Endothelial cell of umbilical vein (primary cell): ENCODE measurements at regions of chr18 and their contacts with region 1.

Region 1: GRCh38 chr18:48848641-48849159 is 102.1 kb downstream of the SMAD7 start:
- DNase-seq: peak; percentile 93
- H3K4me3 ChIP-seq: no peak overlapping the region
- H3K27ac ChIP-seq: peak overlapping the region; percentile 67
- H3K4me1 ChIP-seq: peaks cover 58% of the 10 kb centered on the region
- H3K27me3 ChIP-seq: no peaks in the 10 kb centered on the region
- CTCF ChIP-seq: no peak
- POLR2A ChIP-seq: peak; percentile 59

Region 2: DNA sequence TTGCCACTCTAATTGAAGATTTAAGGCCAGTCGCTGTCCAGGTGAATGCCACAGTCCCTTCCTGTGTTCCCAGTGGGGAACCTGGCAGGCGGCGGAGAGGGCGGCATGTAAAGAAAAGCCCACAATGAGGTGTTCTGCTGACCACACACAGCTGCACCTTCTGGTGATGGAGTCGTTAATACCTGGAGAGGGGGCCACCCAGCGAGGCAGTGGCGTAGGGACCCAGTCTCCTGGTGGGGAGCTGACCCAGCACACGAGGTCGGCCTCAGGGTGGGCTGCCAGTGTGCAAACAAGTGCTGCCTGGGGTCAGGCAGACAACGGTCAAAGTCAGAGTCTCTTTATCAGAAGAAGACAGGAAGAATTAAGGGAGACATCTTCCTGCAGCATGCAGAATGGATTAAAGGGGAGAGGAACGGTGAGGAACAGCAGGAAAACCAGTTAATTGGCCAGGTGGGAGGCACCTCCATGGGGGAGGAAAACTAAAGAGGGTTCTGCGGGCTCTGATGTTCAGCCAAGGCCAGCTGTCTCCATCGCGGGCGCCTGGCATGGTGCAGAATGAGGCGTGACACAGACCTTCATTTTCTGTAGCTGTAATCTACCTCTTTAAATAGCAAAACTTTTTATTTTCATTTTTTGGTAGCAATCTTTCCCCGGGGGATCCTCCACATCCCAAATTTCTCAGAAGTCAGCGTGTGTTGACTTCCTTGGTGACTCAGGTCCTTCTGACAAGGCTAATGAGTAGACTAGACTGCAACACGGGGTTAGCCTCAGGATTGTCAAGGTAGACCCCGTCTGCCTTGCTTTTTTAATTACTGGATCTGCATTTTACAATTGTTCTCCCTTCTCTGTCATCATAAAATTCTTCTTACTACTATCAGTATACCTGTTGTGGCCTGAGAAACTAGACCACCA is 23.8 kb after region 1 on chr18:
- CTCF ChIA-PET with region 1: interaction called, 4 read pairs
- POLR2A ChIA-PET with region 1: no interaction called
- dilution Hi-C with region 1: no loop called
- intact Hi-C with region 1: loop called (anchors 2 kb)
- DNase-seq: no peak
- H3K4me3 ChIP-seq: no peak overlapping the region
- H3K27ac ChIP-seq: peak overlapping the region; percentile 36
- H3K4me1 ChIP-seq: peaks cover 8% of the 10 kb centered on the region
- H3K27me3 ChIP-seq: no peaks in the 10 kb centered on the region
- CTCF ChIP-seq: no peak
- POLR2A ChIP-seq: no peak

Region 3: DNA sequence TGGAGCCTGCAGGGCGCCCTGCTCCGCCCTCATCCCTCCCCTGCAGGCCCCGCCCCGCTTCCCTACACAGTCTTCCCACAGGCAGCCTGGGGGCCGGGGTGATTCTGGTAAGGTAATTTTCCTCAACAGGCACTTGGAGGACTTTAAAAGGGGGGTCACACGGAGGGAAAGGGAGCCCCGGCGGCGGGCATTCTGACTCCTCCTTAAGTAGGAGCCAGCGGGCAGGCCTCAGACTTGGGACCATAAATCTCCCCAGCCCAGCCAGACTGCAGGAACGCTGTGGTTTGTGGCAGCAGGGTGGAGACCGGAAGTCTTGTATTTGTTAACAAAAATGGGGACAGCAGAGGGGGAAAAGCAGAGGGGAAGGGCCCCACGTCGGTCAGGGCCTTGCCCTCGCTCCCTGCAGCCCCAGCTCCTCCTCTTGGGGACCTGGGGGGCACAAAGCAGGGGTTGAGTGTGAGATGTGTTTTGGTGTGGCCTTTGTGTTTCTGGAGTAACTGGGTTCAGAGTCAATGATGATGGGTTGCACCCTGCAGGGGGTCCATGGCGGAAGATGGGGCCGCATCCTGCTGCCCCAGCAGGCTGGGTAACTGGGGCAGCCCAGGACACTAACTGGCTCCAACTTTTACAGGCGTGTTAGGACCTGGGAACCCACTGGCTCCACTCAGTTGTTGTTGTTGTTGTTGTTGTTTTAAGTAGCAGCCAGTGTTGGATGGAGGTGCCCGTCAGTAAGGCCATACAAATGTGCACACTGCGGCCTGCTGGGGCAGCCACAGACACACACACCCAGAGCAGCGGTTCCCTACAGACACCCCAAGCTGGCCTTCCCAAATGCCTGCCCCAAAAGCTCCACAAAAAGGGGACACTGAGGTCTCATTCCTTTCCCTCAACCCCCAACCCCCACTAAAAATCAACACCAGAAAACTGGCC is 74.4 kb after region 1 on chr18:
- CTCF ChIA-PET with region 1: no interaction called
- POLR2A ChIA-PET with region 1: no interaction called
- dilution Hi-C with region 1: no loop called
- intact Hi-C with region 1: loop called (anchors 2 kb)
- DNase-seq: peak; percentile 52
- H3K4me3 ChIP-seq: no peak overlapping the region
- H3K27ac ChIP-seq: peak overlapping the region; percentile 68
- H3K4me1 ChIP-seq: peaks cover 40% of the 10 kb centered on the region
- H3K27me3 ChIP-seq: no peaks in the 10 kb centered on the region
- CTCF ChIP-seq: no peak
- POLR2A ChIP-seq: peak; percentile 16

Region 4: DNA sequence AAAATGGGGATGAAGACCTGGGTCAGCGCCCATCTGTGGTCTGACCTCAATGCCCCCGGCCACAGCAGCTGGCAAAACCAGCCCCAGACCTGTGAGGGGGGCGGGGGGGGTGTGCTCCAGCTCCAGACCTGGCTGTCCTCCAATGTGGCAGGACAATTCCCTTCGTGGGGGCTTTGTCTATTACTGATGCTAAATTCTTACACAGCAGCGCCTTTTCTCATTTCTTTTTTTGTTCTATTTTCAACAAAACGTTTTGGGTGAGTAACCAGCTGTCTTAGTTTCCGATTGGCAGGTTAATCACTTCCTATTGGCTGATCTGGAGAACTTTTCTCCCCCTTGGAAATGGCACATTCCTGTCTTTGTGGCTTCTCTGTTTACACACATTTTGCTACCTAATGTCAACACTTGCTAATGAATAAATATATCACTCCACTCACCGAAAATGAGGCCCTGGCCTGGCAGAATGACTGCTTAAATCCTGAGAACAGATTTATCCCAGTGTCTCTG is 97.7 kb after region 1 on chr18:
- CTCF ChIA-PET with region 1: interaction called, 5 read pairs
- POLR2A ChIA-PET with region 1: no interaction called
- dilution Hi-C with region 1: no loop called
- intact Hi-C with region 1: loop called (anchors 2 kb)
- DNase-seq: peak; percentile 71
- H3K4me3 ChIP-seq: no peak overlapping the region
- H3K27ac ChIP-seq: no peak overlapping the region
- H3K4me1 ChIP-seq: peaks cover 68% of the 10 kb centered on the region
- H3K27me3 ChIP-seq: no peaks in the 10 kb centered on the region
- CTCF ChIP-seq: no peak
- POLR2A ChIP-seq: peak; percentile 46

Region 5: GRCh38 chr18:49072524-49072934 is 223.8 kb after region 1 on chr18:
- CTCF ChIA-PET with region 1: no interaction called
- POLR2A ChIA-PET with region 1: no interaction called
- dilution Hi-C with region 1: no loop called
- intact Hi-C with region 1: no loop called
- DNase-seq: no peak
- H3K4me3 ChIP-seq: no peak overlapping the region
- H3K27ac ChIP-seq: no peak overlapping the region
- H3K4me1 ChIP-seq: no peaks in the 10 kb centered on the region
- H3K27me3 ChIP-seq: no peaks in the 10 kb centered on the region
- CTCF ChIP-seq: no peak
- POLR2A ChIP-seq: no peak

Region 6: GRCh38 chr18:49381267-49381850 is 532.7 kb after region 1 on chr18:
- CTCF ChIA-PET with region 1: no interaction called
- POLR2A ChIA-PET with region 1: no interaction called
- dilution Hi-C with region 1: no loop called
- intact Hi-C with region 1: no loop called
- DNase-seq: no peak
- H3K4me3 ChIP-seq: no peak overlapping the region
- H3K27ac ChIP-seq: no peak overlapping the region
- H3K4me1 ChIP-seq: no peaks in the 10 kb centered on the region
- H3K27me3 ChIP-seq: no peaks in the 10 kb centered on the region
- CTCF ChIP-seq: no peak
- POLR2A ChIP-seq: no peak